CD8-positive, alpha-beta T cell (primary cell): ENCODE measurements at regions of chr1 and their contacts with region 1.

Region 1: DNA sequence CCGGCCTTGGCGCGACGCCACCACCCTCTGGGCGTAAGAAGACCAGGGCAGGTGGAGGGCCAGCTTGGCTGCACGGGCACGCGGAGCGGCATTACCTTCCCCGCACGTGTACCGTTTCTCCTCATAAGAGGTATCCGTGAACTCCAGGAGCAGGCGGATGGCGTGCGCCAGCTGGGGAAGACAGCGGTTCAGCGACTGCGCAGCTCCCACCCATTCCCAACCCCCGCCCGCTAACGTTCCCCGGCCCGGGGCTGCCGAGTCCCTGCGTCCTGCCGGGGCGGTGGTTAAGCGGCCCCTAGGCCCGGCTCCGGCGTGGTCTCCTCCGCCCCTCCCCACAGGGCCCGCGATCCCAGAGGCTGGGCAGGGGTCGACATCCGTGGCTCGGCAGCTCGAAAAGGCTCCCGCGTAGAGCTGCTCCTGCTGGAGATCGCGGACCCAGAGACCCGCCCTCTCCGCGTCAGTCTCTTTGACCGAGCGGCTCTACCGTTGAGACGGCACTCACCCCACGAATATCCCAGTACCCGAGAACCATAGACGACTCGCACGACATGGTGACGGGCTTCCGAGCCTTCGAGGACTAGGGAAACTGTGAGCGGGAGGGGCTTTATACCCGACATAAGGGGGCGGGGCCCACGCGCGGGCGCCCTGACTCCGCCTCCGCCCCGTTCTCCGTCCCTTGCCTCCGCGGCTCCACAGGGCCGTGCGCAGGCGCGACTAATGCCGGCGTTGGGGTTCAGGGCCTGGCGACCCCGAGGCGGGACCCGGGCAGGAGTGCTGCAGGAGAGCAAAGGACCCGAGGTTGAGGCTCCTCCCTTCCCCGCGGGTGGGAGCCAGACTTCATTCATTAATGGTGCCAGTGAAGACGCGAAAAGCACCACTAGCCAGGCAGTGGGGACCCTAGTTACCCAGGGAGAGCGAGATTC is 839 bp downstream of the GSTM3 start:
- DNase-seq: peak; percentile 59 to 91 (median 82)
- ATAC-seq: peak; percentile 97
- H3K4me3 ChIP-seq: peak overlapping the region; percentile 76 to 82
- H3K4me3 Mint-ChIP-seq: peak overlapping the region; percentile 92
- H3K27ac ChIP-seq: peak overlapping the region; percentile 49 to 58
- H3K27ac Mint-ChIP-seq: peak overlapping the region; percentile 89
- H3K4me1 ChIP-seq: peaks cover 13% of the 10 kb centered on the region
- H3K4me1 Mint-ChIP-seq: peaks cover 15% of the 10 kb centered on the region
- H3K27me3 ChIP-seq: peaks cover 0 to 2% of the 10 kb centered on the region in 2 experiments
- H3K27me3 Mint-ChIP-seq: peaks cover 3% of the 10 kb centered on the region
- CTCF ChIP-seq: no peak

Region 2: GRCh38 chr1:109655601-109656519 is 84.1 kb before region 1 on chr1 and contains the start of gene GSTM4:
- CTCF ChIA-PET with region 1: no interaction called
- POLR2A ChIA-PET with region 1: no interaction called
- intact Hi-C with region 1: loop called in 1 of 2 experiments (anchors 5 kb)
- DNase-seq: peak in 8 of 9 experiments; percentile 42 to 83 (median 66)
- ATAC-seq: peak; percentile 86
- H3K4me3 ChIP-seq: peak within 1 kb of the TSS; percentile 66 to 99
- H3K4me3 Mint-ChIP-seq: peak within 1 kb of the TSS; percentile 94
- H3K27ac ChIP-seq: peak within 1 kb of the TSS; percentile 55 to 77
- H3K27ac Mint-ChIP-seq: peak within 1 kb of the TSS; percentile 90
- H3K4me1 ChIP-seq: peaks cover 7% of the 10 kb centered on the region
- H3K4me1 Mint-ChIP-seq: peaks cover 22% of the 10 kb centered on the region
- H3K27me3 ChIP-seq: no peaks in the 10 kb centered on the region
- H3K27me3 Mint-ChIP-seq: no peaks in the 10 kb centered on the region
- CTCF ChIP-seq: no peak
- total RNA-seq, gene GSTM4: 9.5 to 10.5 TPM

Region 3: GRCh38 chr1:109687616-109688499 is 52.1 kb before region 1 on chr1 and contains the start of gene GSTM1:
- CTCF ChIA-PET with region 1: no interaction called
- POLR2A ChIA-PET with region 1: no interaction called
- intact Hi-C with region 1: loop called in 1 of 2 experiments (anchors 5 kb)
- DNase-seq: peak in 5 of 9 experiments; percentile 46 to 92 (median 85)
- ATAC-seq: peak; percentile 98
- H3K4me3 ChIP-seq: peak within 1 kb of the TSS; percentile 60 to 63
- H3K4me3 Mint-ChIP-seq: peak within 1 kb of the TSS; percentile 87
- H3K27ac ChIP-seq: peak within 1 kb of the TSS; percentile 43 to 53
- H3K27ac Mint-ChIP-seq: peak within 1 kb of the TSS; percentile 91
- H3K4me1 ChIP-seq: no peaks in the 10 kb centered on the region
- H3K4me1 Mint-ChIP-seq: peaks cover 8% of the 10 kb centered on the region
- H3K27me3 ChIP-seq: no peaks in the 10 kb centered on the region
- H3K27me3 Mint-ChIP-seq: no peaks in the 10 kb centered on the region
- CTCF ChIP-seq: no peak
- total RNA-seq, gene GSTM1: 11.5 to 14.0 TPM

Region 4: GRCh38 chr1:110524311-110525251 is 784.6 kb after region 1 on chr1:
- CTCF ChIA-PET with region 1: no interaction called
- POLR2A ChIA-PET with region 1: no interaction called
- intact Hi-C with region 1: no loop called
- DNase-seq: peak; percentile 8 to 69 (median 44)
- ATAC-seq: peak; percentile 77
- H3K4me3 ChIP-seq: no peak overlapping the region
- H3K4me3 Mint-ChIP-seq: peak overlapping the region; percentile 22
- H3K27ac ChIP-seq: no peak overlapping the region
- H3K27ac Mint-ChIP-seq: no peak overlapping the region
- H3K4me1 ChIP-seq: peaks cover 6% of the 10 kb centered on the region
- H3K4me1 Mint-ChIP-seq: peaks cover 3% of the 10 kb centered on the region
- H3K27me3 ChIP-seq: no peaks in the 10 kb centered on the region
- H3K27me3 Mint-ChIP-seq: peaks cover 26% of the 10 kb centered on the region
- CTCF ChIP-seq: peak; percentile 64